Caco-2 (cell line): ENCODE measurements at regions of chr17 and their contacts with region 1.

Region 1: DNA sequence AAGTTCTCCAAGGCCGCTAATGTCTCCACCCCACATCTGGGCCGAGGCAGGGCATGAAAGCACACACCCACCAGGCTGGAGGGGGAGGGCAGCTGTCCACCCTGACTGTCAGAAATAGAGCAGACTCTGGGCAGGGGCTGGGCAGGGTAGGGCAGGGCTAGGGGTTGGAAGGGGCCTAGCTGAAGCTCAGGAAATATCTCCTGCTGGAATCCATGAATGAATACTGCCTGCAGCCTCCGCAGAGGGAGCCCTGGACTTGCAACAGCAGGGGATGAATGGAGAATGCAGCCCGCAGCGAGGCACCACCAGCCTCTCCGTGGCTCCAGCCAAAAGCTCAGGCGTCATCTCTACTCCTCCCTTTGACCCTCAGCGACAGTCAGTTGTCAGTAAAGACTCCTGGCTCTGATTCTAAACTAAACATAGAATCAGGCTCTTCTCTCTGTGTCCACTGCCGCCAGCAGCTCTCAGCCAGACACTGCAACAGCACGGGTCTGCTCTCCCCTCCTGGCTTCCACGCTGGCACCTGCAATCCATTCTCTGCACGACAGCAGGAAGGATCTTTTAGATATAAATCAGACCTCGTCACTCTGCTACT is 23.9 kb upstream of the NGFR start:
- DNase-seq: no peak
- H3K4me3 ChIP-seq: no peak overlapping the region
- H3K4me3 Mint-ChIP-seq: no peak overlapping the region
- H3K27ac Mint-ChIP-seq: no peak overlapping the region
- H3K4me1 ChIP-seq: no peaks in the 10 kb centered on the region
- H3K4me1 Mint-ChIP-seq: no peaks in the 10 kb centered on the region
- H3K27me3 ChIP-seq: no peaks in the 10 kb centered on the region
- H3K27me3 Mint-ChIP-seq: peaks cover 27% of the 10 kb centered on the region
- CTCF ChIP-seq: no peak

Region 2: GRCh38 chr17:49341356-49341755 is 129.8 kb before region 1 on chr17:
- CTCF ChIA-PET with region 1: no interaction called
- POLR2A ChIA-PET with region 1: interaction called, 12 read pairs
- intact Hi-C with region 1: no loop called
- DNase-seq: no peak
- H3K4me3 ChIP-seq: no peak overlapping the region
- H3K4me3 Mint-ChIP-seq: no peak overlapping the region
- H3K27ac Mint-ChIP-seq: peak overlapping the region; percentile 20
- H3K4me1 ChIP-seq: no peaks in the 10 kb centered on the region
- H3K4me1 Mint-ChIP-seq: peaks cover 5% of the 10 kb centered on the region
- H3K27me3 ChIP-seq: no peaks in the 10 kb centered on the region
- H3K27me3 Mint-ChIP-seq: no peaks in the 10 kb centered on the region
- CTCF ChIP-seq: no peak

Region 3: DNA sequence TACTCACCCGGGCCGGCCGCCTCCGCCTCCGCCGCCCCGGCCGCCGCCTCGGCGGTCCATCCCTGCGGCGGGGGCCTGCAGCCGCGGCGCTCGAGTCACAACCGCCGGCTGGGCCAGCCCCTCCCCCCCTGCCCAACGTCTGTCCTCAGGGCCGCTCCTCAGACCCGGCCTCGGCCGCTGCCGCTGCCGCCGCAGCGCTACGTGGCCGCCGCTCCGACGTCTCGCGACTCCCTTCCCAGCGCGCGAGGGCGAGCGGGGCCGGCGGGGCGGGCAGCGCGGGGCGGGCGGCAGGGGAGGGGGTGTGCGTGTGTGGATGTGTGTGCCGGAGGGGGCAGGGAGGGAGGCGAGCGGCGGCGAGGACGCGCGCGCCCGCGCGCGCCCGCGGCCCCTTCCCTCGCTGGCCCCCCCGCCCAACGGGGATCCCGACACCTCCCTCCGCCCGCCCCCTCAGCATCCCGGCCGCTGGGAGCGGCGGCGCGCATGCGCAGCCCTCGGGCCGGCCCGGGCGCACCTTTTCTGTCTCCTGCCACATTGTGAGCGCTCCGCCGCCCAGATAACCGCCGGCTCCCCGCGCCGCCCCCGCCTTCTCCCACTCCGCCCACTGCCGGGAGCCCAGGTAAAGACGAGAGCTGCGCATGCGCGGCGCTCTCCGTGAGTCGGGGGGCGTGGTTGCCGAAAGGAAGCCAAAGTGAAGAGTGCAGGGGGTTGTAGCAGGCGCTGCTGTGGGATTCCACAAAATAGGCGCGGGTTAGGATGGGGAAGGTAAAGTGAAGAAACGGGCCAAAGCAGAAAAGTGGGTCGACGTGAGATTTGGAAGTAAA is 109.1 kb before region 1 on chr17 and contains the start of gene ZNF652:
- CTCF ChIA-PET with region 1: no interaction called
- POLR2A ChIA-PET with region 1: no interaction called
- intact Hi-C with region 1: no loop called
- DNase-seq: peak; percentile 100
- H3K4me3 ChIP-seq: peak within 1 kb of the TSS; percentile 64
- H3K4me3 Mint-ChIP-seq: peak within 1 kb of the TSS; percentile 77
- H3K27ac Mint-ChIP-seq: peak within 1 kb of the TSS; percentile 76
- H3K4me1 ChIP-seq: peaks cover 26% of the 10 kb centered on the region
- H3K4me1 Mint-ChIP-seq: peaks cover 27% of the 10 kb centered on the region
- H3K27me3 ChIP-seq: no peaks in the 10 kb centered on the region
- H3K27me3 Mint-ChIP-seq: no peaks in the 10 kb centered on the region
- CTCF ChIP-seq: no peak
- total RNA-seq, gene ZNF652: 89.3 and 92.6 TPM in 2 replicates

Region 4: GRCh38 chr17:49434821-49435670 is 36.1 kb before region 1 on chr17:
- CTCF ChIA-PET with region 1: no interaction called
- POLR2A ChIA-PET with region 1: no interaction called
- intact Hi-C with region 1: loop called (anchors 5 kb)
- DNase-seq: peak; percentile 85 to 88
- H3K4me3 ChIP-seq: no peak overlapping the region
- H3K4me3 Mint-ChIP-seq: no peak overlapping the region
- H3K27ac Mint-ChIP-seq: no peak overlapping the region
- H3K4me1 ChIP-seq: no peaks in the 10 kb centered on the region
- H3K4me1 Mint-ChIP-seq: no peaks in the 10 kb centered on the region
- H3K27me3 ChIP-seq: peaks cover 5% of the 10 kb centered on the region
- H3K27me3 Mint-ChIP-seq: peaks cover 31% of the 10 kb centered on the region
- CTCF ChIP-seq: peak; percentile 97 to 99